Mucosa of descending colon (tissue), 3 donors: ENCODE measurements at regions of chr15 and their contacts with region 1.

Region 1: DNA sequence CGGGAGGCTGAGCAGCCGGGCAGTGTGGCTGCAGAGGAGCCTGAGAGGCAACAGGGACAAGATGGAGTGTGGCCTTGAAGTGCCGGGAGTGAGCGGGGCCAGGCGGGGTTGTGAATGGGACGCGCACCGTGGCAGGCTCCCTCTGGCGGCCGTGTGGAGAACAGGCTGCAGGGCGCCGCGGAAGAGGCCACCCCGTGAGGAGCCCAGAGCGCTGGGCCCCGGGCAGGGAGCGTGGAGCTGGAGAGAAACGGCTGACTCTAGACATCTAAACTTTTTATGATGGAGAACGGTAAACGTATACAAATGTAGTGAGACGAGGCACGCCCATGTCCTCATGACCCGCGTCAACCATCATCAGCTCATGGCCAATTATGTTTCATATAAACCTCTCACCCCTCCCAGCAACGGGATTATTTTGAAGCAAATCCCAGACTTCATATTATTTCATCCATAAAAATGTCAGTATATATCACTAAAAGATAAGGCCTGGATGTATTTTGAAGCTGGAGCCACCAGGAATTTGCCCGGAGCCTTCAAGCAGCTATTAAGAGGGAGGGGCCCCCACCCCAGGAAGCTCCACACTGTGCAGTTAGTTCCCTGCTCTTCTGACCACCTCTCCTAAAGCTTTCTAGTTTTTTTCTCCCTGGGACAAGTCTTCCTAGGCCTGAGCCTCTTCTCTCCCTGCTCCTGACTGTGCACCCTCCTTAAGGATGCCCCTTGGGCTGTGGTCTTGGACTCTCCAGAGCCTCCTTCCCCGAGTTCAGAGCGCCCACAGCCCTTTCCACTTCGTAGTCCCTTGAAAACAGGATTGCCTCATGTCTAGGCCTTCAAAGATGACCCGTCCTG is 149.4 kb downstream of the SMAD6 start:
- DNase-seq: peak; percentile 89 to 92 (median 90)
- ATAC-seq: peak; percentile 97
- H3K4me3 ChIP-seq: no peak overlapping the region
- H3K4me1 ChIP-seq: peaks cover 13% of the 10 kb centered on the region
- CTCF ChIP-seq: peak; percentile 97

Region 2: GRCh38 chr15:66774001-66774814 is 77.2 kb before region 1 on chr15:
- intact Hi-C with region 1: loop called in 1 of 2 experiments (anchors 10 kb)
- DNase-seq: peak; percentile 86 to 94 (median 92)
- ATAC-seq: peak; percentile 81
- H3K4me3 ChIP-seq: no peak overlapping the region
- H3K4me1 ChIP-seq: peaks cover 48% of the 10 kb centered on the region
- CTCF ChIP-seq: peak; percentile 90

Region 3: GRCh38 chr15:67033571-67034044 is 182.2 kb after region 1 on chr15:
- intact Hi-C with region 1: no loop called
- DNase-seq: peak in 1 of 3 donors; percentile 59
- ATAC-seq: peak; percentile 67
- H3K4me3 ChIP-seq: no peak overlapping the region
- H3K4me1 ChIP-seq: peaks cover 3% of the 10 kb centered on the region
- CTCF ChIP-seq: no peak